CD8-positive, alpha-beta memory T cell (primary cell): ENCODE measurements at regions of chr14 and their contacts with region 1.

Region 1: DNA sequence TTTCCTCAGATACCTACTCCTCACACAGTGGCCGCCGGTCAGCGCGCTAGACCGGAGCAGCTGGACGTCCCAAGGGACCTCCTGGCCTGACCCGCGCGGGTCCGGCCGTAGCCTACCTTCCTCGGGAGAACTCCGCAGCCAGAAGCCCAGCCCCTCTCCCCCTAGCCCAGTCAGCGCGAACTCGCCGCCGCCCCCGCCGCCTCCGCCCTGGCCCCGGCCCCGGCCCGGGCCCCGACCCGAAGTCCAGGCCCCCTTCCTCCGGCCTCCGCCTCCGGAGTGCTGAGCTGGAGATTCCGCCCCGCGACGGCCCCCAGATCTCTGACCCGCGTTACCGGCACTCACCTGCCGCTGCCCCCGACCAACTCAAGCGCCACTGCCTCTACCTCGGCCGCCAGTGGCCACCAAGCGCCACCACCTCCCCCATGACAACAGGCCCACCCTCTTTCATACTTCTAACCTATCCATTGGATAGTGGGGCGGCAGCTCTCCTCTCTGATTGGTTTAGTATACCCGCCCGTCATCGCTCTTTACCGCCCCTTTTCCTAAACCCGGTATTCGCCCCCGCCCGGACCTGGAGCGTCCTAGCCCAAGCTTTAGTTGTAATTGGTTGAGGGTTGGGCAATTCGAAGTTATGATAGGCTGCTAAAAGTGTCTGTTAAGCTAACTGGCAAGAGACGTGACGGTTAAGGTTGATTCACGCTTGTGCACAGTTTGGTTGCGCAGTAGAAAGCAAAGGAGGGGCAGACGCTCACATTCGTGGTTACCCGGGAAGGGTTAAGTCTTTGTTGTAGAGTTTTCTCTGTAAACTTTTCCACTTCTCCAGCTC is at the start of gene NUMB:
- DNase-seq: peak; percentile 92 to 98 (median 98)
- H3K4me3 ChIP-seq: peak within 1 kb of the TSS; percentile 72
- H3K4me3 Mint-ChIP-seq: peak within 1 kb of the TSS; percentile 89 to 100 (median 97)
- H3K27ac ChIP-seq: peak within 1 kb of the TSS; percentile 71
- H3K27ac Mint-ChIP-seq: peak within 1 kb of the TSS; percentile 72 to 99 (median 96)
- H3K4me1 ChIP-seq: peaks cover 26% of the 10 kb centered on the region
- H3K4me1 Mint-ChIP-seq: peaks cover 35 to 51% (median 47%) of the 10 kb centered on the region in 3 donors
- H3K27me3 ChIP-seq: no peaks in the 10 kb centered on the region
- H3K27me3 Mint-ChIP-seq: no peaks in the 10 kb centered on the region
- total RNA-seq, gene NUMB: 36.5 to 38.5 TPM

Region 2: DNA sequence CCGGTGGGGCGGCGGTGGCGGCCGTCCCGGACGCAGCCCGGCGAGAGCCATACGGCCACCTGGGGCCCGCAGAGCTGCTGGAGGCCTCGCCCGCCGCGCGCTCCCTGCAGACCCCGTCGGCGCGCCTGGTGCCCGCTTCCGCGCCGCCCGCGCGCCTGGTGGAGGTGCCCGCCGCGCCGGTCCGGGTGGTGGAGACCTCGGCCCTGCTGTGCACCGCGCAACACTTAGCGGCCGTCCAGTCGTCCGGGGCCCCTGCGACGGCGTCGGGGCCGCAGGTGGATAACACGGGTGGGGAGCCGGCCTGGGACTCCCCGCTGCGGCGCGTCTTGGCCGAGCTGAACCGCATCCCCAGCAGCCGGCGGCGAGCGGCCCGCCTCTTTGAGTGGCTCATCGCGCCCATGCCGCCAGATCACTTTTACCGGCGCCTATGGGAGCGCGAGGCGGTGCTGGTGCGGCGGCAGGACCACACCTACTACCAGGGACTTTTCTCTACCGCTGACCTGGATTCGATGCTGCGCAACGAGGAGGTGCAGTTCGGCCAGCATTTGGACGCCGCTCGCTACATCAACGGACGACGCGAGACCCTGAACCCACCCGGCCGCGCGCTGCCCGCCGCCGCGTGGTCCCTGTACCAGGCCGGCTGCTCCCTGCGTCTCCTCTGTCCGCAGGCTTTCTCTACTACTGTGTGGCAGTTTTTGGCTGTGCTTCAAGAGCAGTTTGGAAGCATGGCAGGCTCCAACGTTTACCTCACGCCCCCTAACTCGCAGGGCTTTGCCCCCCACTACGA is 33.1 kb after region 1 on chr14:
- CTCF ChIA-PET with region 1: interaction called, 7 read pairs
- POLR2A ChIA-PET with region 1: interaction called, 22 read pairs
- DNase-seq: peak; percentile 57 to 80 (median 67)
- H3K4me3 ChIP-seq: peak overlapping the region; percentile 85
- H3K4me3 Mint-ChIP-seq: peak overlapping the region; percentile 86 to 98 (median 87)
- H3K27ac ChIP-seq: peak overlapping the region; percentile 88
- H3K27ac Mint-ChIP-seq: peak overlapping the region in 7 of 8 donors; percentile 80 to 92 (median 88)
- H3K4me1 ChIP-seq: peaks cover 31% of the 10 kb centered on the region
- H3K4me1 Mint-ChIP-seq: peaks cover 43 to 61% (median 61%) of the 10 kb centered on the region in 3 donors
- H3K27me3 ChIP-seq: no peaks in the 10 kb centered on the region
- H3K27me3 Mint-ChIP-seq: no peaks in the 10 kb centered on the region